GM18951 (cell line): ENCODE measurements at regions of chr1 and their contacts with region 1.

Region 1: DNA sequence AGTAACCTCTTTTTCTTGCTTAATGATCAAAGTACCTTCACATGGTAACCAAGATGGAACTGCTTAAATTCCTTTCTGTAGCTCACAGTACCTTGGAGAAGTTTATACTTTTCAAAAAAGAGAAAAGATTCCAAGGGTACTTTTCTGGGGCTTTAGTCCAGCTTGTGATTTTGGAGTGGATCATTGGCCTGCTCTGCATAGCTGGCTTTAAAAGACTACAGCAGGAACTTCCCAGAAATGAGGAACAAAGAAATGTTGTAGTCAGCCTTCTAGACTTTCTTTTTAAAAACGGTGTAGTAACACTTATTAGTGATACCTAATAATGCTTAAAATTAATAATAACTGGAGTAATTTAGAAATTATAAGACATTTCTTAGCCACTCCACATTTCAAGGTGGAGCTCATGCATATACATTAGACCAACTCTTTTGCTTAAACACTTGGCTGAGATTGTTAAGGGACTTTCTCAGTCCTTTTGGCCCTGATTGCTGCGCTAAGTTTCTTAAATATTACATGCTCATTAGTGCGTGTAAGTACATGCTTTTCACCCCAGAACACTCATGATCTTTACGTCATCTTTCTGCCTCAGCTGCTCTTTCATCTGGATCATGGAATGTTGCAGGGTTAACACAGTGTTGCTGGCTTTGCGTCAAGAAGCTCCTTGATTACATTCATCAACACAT is 57.3 kb downstream of the SDCCAG8 start:
- POLR2A ChIP-seq: no peak

Region 2: GRCh38 chr1:242467556-242468145 is 845.4 kb before region 1 on chr1:
- in situ Hi-C with region 1: loop called (anchors 25 kb)
- POLR2A ChIP-seq: no peak

Region 3: DNA sequence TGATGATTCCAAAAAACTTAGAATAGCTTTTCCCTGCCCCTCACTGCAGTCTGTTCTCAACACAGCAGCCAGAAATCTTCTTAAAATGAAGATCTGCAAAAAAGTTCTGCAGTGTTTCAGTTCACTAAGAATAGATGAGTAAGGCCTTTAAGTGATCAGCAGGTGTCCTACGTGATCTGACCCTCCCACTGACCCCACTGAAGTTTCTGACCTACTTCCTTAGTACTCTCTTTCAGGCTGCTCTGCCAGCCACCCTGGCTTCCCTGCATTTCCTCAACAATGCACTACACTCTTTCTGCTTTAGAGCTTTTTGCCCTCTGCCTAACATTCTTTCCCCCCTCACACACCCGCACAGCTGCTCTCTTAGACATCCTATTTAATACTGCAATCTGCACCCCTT is 354.5 kb after region 1 on chr1:
- in situ Hi-C with region 1: no loop called
- POLR2A ChIP-seq: no peak